ENCODE measurements at regions of chr6 and their contacts with region 1.

Region 1: GRCh38 chr6:28981833-28982475 is 23.2 kb downstream of the ZNF311 start:
- DNase-seq: peak; percentile 48 to 94 (median 71)

Region 2: DNA sequence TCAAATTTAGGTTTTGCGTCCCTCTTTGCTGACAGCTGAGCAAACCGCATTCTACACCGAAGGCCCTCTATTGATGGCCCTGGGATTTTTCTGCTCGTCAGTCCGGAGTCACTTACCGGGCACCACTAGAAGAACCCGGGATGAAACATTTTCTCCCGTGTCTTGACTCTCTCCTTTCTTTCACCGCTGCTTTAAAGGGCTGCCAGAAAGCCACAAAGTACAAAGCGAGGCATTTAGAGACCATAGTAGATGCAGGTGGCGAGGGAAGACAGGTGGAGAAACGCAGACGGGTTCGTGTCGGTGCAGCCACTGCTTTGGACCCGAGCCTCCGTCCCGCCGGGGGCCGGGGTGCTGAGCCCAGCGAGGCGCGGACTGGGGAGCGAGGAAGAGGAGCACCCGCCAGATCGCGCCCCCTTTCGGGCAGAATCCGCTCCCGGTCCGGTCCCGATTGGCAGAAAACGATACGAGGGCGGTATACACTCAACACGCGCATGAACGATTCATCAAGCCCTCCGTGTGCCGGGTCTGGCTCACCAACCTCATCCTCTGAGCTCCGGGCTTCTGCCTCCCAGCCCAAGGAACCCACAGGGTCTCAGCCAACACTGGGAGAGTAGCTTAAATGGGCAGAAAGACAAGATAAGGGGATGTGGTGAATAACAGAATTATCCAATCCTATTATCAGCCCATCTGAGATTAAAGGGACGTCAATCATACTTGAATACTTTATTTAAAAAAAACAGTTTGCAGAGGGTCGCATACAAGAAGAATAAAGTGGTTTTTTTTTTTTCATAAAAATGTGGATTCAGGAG is 143.1 kb before region 1 on chr6:
- intact Hi-C with region 1: loop called (anchors 2 kb)
- DNase-seq: peak; percentile 71 to 97 (median 82)

Region 3: GRCh38 chr6:28863604-28864320 is 118.2 kb before region 1 on chr6:
- intact Hi-C with region 1: loop called (anchors 1 kb)
- DNase-seq: peak; percentile 63 to 96 (median 80)

Region 4: DNA sequence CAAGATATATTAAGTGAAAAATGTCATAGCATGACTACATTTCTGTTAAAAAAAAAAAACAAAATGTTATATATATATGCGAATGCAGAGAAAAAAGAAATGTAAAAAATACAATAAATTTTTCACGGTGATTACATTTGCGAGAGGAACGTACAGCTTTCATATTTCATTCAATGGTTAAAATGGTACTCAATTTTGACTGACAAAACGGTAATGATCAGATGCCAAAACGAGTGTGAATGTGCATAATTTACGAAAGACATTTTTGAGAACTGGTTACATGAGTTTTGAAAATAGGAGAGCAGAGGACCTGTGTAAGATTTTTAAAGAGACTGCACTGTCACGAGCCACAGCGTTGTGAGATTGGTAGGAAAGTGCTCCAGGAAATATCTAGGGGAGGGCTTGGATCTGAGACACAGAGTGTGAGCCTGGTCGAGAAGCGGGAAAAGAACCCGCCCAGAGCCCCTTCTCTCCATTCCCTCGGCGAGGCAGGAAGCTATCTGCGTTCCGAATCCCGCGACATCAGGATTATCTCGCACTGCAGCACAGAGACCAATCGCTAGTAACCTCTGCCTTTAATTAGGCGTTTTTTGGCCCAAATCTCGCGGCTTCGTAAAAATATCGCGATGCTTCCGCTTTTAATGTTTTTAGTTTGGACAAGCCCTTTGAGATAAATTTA is 86.7 kb before region 1 on chr6:
- intact Hi-C with region 1: loop called (anchors 2 kb)
- DNase-seq: peak; percentile 66 to 98 (median 86)

Region 5: DNA sequence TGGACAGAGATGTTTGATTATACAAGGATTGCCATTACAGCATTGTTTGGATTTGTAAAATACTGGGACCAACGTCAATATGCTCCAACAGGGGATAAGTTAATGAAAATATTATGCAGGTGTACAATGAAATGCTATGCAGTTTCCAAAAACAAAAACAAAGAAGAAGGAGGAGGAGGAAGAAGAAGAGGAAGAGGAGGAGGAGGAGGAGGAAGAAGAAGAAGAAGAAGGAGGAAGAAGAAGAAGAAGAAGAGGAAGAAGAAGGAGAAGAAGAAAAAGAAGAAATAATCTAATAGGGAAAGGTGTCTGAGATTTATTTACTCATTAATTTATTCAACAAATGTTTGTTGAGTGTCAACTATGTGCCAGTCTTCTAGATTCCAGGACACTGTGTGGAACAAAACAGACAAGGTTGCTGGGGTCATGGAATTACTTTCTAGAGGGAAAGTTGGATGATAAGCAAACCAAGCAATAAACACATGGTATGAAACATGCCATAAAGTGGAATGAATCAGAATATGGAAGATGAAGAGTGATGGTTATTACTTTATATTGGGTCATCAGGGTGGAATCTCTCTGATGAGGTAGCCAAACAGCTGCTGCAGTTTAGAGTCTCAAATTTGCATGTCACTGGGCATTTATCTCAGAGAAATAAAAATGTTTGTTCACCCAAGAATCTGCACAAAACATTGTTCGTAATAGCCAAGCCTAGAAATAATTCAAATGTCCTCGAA is 51.9 kb before region 1 on chr6:
- intact Hi-C with region 1: no loop called
- DNase-seq: no peak

Region 6: GRCh38 chr6:28940858-28941680 is 40.9 kb before region 1 on chr6:
- intact Hi-C with region 1: loop called (anchors 2 kb)
- DNase-seq: peak in 8 of 10 donors; percentile 47 to 91 (median 67)

Region 7: GRCh38 chr6:29016559-29017427 is 34.8 kb after region 1 on chr6:
- intact Hi-C with region 1: loop called (anchors 5 kb)
- DNase-seq: peak; percentile 39 to 93 (median 77)

Measured in posterior cingulate gyrus (tissue), 11 donors.